Motor neuron (in vitro differentiated cells): ENCODE measurements at regions of chr6 and their contacts with region 1.

Region 1: DNA sequence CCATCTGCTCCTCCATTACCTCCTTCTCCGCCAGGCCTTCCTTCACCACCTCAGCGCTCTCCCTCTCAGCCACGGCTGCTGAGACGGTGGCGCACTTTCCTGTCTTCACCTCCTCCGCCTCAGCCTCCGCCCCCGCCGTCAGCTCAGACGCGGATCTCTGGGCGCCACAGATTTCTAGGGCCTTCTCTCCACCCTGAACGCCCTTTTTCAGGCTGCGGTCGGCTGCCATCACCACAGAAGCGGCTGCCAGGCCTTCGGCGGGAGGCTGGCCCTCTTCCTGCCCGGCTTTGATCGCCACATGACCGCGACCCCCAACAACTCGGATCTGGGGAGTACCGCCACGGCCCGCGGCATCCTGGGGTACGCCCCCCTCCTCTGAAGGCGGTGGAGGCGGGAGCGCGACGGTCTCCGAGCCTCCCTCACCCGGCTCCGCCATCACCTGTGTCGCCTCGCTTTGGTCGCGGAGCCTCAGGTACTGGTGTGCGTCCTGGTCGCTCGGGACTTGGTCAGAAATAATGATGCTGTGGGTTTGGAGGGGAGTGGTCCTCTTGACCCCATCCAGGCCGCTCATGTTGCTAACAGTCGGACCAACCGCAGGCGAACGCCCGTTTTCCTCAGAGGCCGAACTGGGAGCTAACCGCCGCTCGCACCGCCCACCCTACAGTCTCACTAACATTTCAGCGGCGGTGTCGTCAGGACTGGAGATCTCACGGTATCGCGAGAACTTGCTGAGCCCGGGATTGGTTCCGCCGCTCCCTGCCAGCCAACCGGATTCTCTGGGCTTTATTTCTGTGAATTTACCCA is at the start of gene TSPYL1:
- ATAC-seq: peak; percentile 92 to 99 (median 96)
- H3K4me3 ChIP-seq: peak within 1 kb of the TSS; percentile 65 to 96 (median 82)
- H3K27ac ChIP-seq: peak within 1 kb of the TSS; percentile 87 to 90
- H3K4me1 ChIP-seq: peaks cover 19 to 31% of the 10 kb centered on the region in 2 donors
- total RNA-seq, gene TSPYL1: 44.9 to 103 (median 70.5) TPM

Region 2: GRCh38 chr6:116444092-116444491 is 164.6 kb after region 1 on chr6:
- in situ Hi-C with region 1: loop called in 1 of 9 experiments (anchors 25 kb)
- ATAC-seq: peak in 3 of 8 experiments; percentile 61 to 76 (median 71)
- H3K4me3 ChIP-seq: no peak overlapping the region
- H3K27ac ChIP-seq: no peak overlapping the region
- H3K4me1 ChIP-seq: peaks cover 2 to 3% of the 10 kb centered on the region in 2 donors

Region 3: DNA sequence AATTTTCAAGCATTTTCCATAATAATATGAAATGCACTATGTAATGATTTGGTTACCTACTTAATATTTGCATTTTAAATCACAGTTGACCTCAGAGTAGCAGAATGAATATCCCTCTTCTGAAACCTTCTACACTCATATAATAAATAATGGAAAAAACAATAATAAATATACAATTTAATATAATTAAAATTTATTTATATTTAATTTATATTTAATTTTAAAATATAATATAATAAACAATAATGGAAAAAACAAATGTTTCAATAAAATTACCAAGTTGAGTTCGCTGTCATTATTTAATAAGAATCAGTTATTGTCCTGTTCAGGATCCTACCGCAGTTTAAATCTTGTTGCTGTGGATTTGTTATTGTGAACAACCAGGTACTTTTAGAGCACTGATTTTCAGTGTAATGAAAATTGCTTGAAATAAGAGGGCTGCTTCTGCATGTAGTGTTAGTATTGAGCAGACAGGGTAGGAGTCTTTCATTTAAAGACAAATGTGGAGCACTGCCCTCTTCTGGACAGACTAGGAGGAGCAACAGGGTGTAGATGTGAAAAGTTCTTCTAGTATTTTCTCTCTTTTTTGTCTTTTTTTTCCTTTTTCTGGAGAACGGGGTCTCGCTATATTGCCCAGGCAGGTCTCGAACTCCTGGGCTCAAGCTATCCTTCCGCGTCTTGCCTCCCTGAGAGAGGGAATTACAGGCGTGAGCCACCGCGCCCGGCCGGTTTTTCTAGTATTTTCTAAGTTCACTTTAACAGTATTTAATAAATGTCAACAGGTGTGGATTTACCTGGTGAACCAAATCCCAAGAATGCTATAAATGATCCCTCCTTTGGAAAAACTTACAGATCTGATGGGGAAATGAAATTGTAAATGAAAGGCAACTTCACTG is 252.5 kb after region 1 on chr6:
- in situ Hi-C with region 1: loop called in 3 of 9 experiments (anchors 25 kb)
- ATAC-seq: peak; percentile 50 to 83 (median 66)
- H3K4me3 ChIP-seq: no peak overlapping the region
- H3K27ac ChIP-seq: no peak overlapping the region
- H3K4me1 ChIP-seq: peaks cover 2 to 3% of the 10 kb centered on the region in 2 donors

Region 4: DNA sequence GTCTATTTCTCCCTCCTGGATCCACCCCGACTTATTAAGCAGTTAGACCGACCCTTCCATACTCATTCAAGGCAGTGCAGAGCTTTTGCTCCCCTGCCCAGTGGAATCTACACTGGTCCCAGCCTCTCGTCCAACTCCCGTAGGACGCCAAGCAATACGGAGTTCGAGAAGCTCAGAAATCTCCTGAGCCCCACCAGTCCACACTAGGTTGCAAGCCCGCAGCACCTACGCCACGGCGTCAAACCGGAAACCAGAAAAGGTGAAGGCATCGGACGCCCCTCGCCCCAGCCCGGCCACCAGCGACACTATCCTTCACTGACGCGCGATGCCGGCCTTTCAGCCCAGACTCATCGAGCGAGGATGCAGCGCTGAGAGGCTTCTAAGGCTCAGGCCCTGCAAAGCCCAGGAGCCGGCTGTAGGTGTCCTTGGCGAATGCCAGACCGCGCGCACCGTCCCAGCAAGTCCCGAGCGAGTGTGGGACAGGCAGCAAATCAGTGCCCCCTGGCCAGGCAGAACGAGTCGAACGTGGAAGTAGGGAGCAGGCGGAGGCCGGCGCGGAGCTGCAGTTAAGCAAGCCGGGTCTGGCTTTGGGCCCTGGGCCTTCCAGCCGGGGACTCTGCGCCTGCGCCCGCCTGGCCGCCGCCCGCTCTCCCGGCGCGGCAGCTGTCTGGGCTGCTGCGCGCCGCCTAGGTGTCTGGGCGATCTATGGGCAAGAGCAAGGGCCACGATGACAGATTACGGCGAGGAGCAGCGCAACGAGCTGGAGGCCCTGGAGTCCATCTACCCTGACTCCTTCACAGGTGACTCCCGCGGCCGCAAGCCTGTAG is 291.6 kb after region 1 on chr6 and contains the start of gene RWDD1:
- in situ Hi-C with region 1: loop called in 4 of 9 experiments (anchors 25 kb)
- ATAC-seq: peak; percentile 93 to 98 (median 97)
- H3K4me3 ChIP-seq: peak within 1 kb of the TSS; percentile 54 to 93 (median 75)
- H3K27ac ChIP-seq: peak within 1 kb of the TSS; percentile 81 to 94
- H3K4me1 ChIP-seq: peaks cover 7 to 9% of the 10 kb centered on the region in 2 donors
- total RNA-seq, gene RWDD1: 39.5 to 53.6 (median 45.1) TPM